ENCODE measurements at regions of chr11 and their contacts with region 1.

Region 1: DNA sequence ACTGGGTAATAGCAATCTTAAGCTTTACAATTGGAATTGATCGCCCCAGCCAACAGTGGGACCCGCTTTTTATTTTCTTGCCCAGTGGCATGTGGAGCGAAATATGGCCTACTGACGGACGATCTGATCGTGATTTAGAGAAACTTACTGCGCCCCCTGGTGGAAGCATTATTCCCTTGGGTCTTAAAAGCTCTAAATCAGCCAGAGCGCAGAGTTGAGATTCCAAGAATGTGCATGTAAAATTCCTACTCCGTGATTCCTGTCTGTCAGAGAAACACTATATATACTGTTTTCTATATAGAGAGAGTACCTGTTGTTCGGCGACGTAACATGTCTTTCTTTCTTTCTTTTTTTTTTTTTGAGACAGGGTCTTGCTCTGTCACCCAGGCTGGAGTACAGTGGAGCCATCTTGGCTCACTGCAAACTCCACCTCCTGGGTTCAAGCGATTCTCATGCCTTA is 3.7 kb upstream of the DPF2 start:
- DNase-seq: peak; percentile 95
- H3K4me3 ChIP-seq: no peak overlapping the region
- H3K27ac ChIP-seq: peak overlapping the region; percentile 24
- H3K4me1 ChIP-seq: peaks cover 6% of the 10 kb centered on the region
- H3K27me3 ChIP-seq: no peaks in the 10 kb centered on the region
- CTCF ChIP-seq: peak; percentile 88

Region 2: DNA sequence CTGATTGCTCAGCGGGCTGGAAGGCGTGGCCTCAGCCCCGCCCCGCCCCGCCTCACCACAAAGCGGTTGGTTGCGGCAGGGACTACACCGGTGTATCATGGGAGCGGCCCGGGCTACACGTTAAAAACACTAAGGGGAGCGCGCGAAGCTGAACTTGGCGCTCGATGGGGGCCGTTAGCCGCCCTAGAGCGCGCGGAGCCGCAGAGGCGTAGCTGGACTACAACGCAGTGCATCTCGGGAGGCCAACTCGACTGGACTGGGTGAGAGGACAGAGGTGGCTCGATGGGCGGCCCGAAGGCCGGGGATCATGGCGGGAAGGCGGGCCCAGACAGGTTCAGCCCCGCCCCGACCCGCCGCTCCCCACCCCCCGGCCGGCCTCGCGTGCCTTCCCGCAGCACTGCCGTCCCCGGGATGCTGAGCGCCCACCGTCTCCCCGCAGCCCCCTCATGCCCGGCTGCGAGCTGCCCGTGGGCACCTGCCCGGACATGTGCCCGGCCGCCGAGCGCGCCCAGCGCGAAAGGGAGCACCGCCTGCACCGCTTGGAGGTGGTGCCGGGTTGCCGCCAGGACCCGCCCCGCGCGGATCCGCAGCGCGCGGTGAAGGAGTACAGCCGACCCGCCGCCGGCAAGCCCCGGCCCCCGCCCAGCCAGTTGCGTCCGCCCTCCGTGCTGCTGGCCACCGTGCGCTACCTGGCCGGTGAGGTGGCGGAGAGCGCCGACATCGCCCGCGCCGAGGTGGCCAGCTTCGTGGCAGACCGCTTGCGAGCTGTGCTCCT is 288.9 kb before region 1 on chr11 and contains the start of gene SAC3D1:
- CTCF ChIA-PET with region 1: no interaction called
- POLR2A ChIA-PET with region 1: interaction called, 12 read pairs
- intact Hi-C with region 1: no loop called
- DNase-seq: peak; percentile 99
- H3K4me3 ChIP-seq: peak within 1 kb of the TSS; percentile 91
- H3K27ac ChIP-seq: peak within 1 kb of the TSS; percentile 94
- H3K4me1 ChIP-seq: peaks cover 7% of the 10 kb centered on the region
- H3K27me3 ChIP-seq: no peaks in the 10 kb centered on the region
- CTCF ChIP-seq: no peak
- total RNA-seq, gene SAC3D1: 41.9 and 43.9 TPM in 2 replicates

Region 3: DNA sequence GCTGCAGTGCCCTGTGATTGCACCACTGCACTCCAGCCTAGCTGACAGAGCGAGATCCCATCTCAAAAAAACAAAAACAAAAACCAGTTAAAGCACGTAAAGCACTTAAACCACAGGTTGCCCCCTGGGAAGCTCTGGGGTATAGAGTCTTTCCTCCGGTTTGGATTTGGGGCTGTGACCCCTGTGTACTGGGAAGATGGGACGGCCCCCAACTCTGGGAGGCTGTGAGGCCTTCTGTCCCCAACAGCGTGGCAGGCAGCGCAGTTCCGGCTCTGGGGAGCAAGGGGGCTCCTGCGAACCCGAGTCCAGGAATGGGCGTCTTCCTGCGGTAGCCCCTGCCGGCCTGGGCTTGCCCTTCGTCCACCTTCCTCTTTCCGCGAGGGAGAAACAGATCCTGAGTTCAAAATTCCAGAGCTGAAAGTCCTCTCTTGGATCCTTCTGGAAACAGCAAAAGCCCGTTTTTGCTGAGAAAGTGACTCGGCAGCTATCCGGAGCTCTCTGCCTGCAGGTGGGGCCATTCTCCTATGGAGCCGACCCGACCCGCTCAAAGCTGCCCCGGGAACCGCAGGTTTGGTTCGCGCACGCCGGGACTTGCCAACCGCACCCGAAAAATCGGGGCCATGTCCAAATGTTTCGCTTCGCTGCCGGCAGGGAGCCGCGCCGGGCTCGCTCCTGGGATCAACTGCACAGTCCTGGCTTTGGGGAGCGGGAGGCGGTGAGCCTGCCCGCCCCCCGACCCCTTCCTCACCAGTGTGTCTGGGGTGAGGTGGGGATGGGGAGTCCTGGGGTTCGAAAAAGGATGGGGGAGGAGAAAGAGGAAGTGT is 104.5 kb before region 1 on chr11:
- CTCF ChIA-PET with region 1: interaction called, 18 read pairs
- POLR2A ChIA-PET with region 1: no interaction called
- intact Hi-C with region 1: no loop called
- DNase-seq: peak; percentile 77
- H3K4me3 ChIP-seq: peak overlapping the region; percentile 51
- H3K27ac ChIP-seq: peak overlapping the region; percentile 53
- H3K4me1 ChIP-seq: peaks cover 12% of the 10 kb centered on the region
- H3K27me3 ChIP-seq: no peaks in the 10 kb centered on the region
- CTCF ChIP-seq: peak; percentile 86

Region 4: DNA sequence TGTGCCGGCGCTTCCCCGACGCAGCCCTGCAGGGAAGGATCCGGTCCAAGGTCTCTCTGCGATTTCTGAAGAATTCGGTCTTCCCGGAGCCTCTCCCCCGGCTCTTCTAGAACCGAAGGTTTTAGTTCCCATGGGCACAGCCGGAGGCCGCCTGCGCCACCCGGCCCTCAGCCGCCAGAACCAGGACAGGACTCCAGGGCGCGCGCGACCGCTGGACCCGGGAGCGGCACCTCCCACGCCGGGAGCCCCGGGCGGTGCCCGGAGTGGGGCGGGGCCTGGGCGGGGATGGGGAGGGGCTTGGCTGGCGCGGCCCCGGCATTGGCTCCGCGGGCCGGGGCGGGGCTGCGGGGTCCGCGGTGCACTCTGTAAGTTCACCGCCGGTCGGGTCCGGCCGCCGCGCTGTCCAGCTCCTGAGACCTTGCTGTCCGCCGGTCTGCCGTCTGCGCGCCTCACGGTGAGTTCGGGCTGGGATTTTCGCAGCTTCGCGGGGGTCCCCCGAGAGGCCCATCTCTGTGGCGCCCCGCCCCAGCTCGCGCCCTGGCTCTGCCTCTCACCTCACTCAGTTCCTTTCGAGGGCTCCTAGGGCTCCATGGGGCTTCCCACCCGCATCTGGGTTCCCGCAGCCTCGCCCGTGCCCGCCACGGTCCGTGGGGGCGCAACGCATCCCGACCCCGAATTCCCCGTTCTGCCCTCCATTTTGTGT is 15.3 kb before region 1 on chr11 and contains the start of gene CDC42EP2:
- CTCF ChIA-PET with region 1: interaction called, 34 read pairs
- POLR2A ChIA-PET with region 1: no interaction called
- intact Hi-C with region 1: no loop called
- DNase-seq: peak; percentile 85
- H3K4me3 ChIP-seq: peak within 1 kb of the TSS; percentile 80
- H3K27ac ChIP-seq: peak within 1 kb of the TSS; percentile 71
- H3K4me1 ChIP-seq: peaks cover 15% of the 10 kb centered on the region
- H3K27me3 ChIP-seq: no peaks in the 10 kb centered on the region
- CTCF ChIP-seq: no peak
- total RNA-seq, gene CDC42EP2: 4.8 and 5.4 TPM in 2 replicates